ENCODE measurements at regions of chr1 and their contacts with region 1.

Region 1: GRCh38 chr1:219555031-219555692 is 57.7 kb downstream of the ZC3H11B start:
- DNase-seq: no peak
- CTCF ChIP-seq: no peak

Region 2: DNA sequence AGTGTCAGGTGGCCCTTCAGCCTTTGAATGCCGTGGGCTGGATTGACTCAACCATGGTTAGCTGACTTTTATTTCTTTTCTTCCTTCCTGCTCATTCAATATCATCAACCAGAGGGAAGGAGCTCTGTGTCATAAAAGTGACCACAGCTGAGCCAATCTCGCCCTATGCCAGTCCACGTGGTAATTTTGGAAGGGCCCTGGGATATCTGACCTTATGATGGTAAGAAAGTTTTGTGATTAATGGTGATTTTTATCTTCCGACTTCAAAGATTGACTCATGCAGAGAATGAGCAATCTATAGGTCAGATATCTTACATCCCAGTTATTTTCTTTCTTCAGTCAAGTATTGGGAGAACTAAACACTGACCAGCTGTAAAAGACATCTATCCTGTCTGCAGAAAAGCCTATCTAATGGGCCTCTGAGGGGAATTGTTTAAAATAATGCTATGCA is 112.5 kb before region 1 on chr1:
- CTCF ChIA-PET with region 1: no interaction called
- POLR2A ChIA-PET with region 1: no interaction called
- DNase-seq: no peak
- CTCF ChIP-seq: no peak

Region 3: DNA sequence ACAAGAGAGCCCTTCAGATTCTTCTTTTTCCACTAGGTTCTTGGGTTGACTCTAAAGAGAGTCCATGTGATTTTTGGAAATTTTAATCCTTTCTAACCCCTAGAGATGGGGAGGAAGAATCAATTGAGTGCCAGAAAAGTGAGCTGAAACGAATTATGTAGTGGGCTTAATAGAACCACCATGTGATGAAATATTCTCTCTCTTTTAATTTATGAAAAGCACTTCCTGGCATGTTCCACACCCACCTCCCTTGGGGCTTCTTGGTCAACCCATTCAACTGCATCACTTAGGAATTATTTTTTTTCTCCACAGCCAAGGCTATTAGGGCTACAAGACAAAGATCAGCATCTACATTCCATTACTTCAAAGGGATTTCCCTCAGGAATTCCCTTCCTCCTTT is 21.9 kb before region 1 on chr1:
- CTCF ChIA-PET with region 1: interaction called, 82 read pairs
- POLR2A ChIA-PET with region 1: no interaction called
- DNase-seq: no peak
- CTCF ChIP-seq: no peak

Region 4: GRCh38 chr1:219576931-219577730 is 22.0 kb after region 1 on chr1:
- CTCF ChIA-PET with region 1: no interaction called
- POLR2A ChIA-PET with region 1: no interaction called
- DNase-seq: no peak
- CTCF ChIP-seq: no peak

Region 5: GRCh38 chr1:219833214-219833815 is 278.2 kb after region 1 on chr1:
- CTCF ChIA-PET with region 1: no interaction called
- POLR2A ChIA-PET with region 1: no interaction called
- DNase-seq: no peak
- CTCF ChIP-seq: no peak